ENCODE measurements at regions of chr1 and their contacts with region 1.

Region 1: DNA sequence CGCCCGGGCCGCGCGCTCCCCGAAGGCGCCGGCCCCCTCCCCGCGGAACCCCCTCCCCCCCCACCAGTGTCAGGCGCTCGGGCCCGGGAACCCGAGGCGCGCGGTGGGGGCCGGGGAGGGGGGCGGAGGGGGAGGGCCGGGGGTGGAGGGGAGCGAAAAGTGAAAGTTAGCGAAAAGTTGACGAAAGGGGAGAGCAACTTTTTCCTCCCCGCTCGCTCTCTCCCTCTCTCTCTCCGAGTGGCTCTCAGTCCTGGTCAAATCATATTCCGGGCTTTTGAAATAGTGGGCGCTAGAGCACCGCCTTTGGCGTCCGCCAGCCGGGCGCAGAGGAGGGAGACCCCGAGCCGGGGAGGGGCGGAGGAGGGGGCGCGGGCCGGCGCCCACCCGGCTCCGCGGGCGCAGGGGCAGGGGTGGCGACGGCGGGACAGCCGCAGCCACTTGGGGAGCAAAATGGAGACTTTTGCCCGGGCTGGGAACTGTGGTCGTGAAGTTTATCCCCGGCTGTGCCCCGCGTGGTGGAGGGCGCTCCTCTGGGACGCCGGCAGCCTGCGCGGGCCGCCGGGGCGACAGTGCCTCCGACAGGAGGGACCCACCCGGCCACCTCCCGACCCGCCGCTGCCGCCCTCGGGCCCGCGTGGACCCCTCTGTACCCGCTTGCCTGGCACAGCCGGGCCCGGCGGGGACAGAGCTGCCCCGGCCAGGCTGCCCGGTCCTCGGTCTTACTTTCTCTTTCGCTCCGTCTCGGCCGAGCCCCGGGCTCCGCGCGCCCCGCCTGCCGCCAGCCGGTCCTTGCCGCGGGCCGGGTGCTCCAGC is 694 bp downstream of the PRDM16 start:
- DNase-seq: no peak
- ATAC-seq: peak; percentile 43
- H3K4me3 ChIP-seq: peak overlapping the region; percentile 63 to 65
- H3K27ac ChIP-seq: peak overlapping the region; percentile 75
- H3K4me1 ChIP-seq: peaks cover 40% of the 10 kb centered on the region
- H3K27me3 ChIP-seq: no peaks in the 10 kb centered on the region
- CTCF ChIP-seq: peak; percentile 73

Region 2: DNA sequence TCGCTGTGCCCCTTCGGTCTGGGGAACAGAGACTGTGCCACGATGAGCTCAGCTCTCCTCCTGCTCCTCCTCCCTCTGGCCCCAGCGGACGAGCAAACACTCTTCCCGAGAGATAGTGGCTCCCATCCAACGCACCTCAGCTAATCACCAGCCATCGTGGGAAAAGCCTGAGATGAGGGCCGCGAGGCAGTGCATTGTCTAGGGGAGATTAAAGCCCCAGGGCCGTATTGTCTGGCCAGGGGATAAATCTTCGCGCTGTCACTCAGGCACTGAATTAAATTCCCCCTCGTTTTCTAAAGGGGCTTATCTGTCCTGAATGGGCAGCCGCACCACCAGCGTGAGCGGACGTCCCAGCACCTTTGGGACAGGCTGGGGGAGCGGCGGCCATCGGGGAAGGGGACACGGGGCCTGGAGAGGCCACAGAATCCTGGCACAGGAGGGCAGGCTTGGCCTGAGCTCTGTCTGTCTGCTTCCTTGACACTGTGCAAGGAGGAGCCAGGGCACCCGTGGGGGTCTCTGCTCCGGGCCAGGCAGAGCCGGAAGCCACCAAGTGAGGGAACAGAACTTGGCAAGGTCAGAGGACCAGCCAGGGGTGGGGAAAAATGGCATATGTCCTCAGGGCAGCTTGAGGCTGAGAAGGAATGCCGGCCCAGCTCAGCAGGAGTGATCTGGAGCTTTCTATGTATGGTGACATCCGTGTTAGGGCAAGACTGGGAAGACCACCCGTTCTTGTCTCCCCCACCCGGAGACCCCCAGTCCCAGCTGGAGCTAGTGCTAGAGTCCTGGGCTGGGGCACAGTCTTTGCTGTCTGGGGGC is 31.6 kb after region 1 on chr1:
- CTCF ChIA-PET with region 1: no interaction called
- POLR2A ChIA-PET with region 1: no interaction called
- in situ Hi-C with region 1: no loop called
- intact Hi-C with region 1: no loop called
- DNase-seq: no peak
- ATAC-seq: no peak
- H3K4me3 ChIP-seq: no peak overlapping the region
- H3K27ac ChIP-seq: no peak overlapping the region
- H3K4me1 ChIP-seq: no peaks in the 10 kb centered on the region
- H3K27me3 ChIP-seq: no peaks in the 10 kb centered on the region
- CTCF ChIP-seq: no peak

Region 3: GRCh38 chr1:3113047-3113740 is 43.5 kb after region 1 on chr1:
- CTCF ChIA-PET with region 1: no interaction called
- POLR2A ChIA-PET with region 1: no interaction called
- in situ Hi-C with region 1: no loop called
- intact Hi-C with region 1: no loop called
- DNase-seq: no peak
- ATAC-seq: peak; percentile 57; the same call in 1 of the 2 replicates
- H3K4me3 ChIP-seq: no peak overlapping the region
- H3K27ac ChIP-seq: no peak overlapping the region
- H3K4me1 ChIP-seq: 0 out of 2 replicates have a peak, but pooled peaks cover 4% of the 10 kb centered on the region
- H3K27me3 ChIP-seq: no peaks in the 10 kb centered on the region
- CTCF ChIP-seq: no peak

Region 4: GRCh38 chr1:3126756-3127597 is 57.3 kb after region 1 on chr1:
- CTCF ChIA-PET with region 1: no interaction called
- POLR2A ChIA-PET with region 1: no interaction called
- in situ Hi-C with region 1: no loop called
- intact Hi-C with region 1: no loop called
- DNase-seq: no peak
- ATAC-seq: no peak
- H3K4me3 ChIP-seq: no peak overlapping the region
- H3K27ac ChIP-seq: no peak overlapping the region
- H3K4me1 ChIP-seq: peaks cover 14% of the 10 kb centered on the region
- H3K27me3 ChIP-seq: no peaks in the 10 kb centered on the region
- CTCF ChIP-seq: no peak

Region 5: GRCh38 chr1:3423245-3423829 is 353.6 kb after region 1 on chr1:
- CTCF ChIA-PET with region 1: interaction called, 7 read pairs
- POLR2A ChIA-PET with region 1: no interaction called
- in situ Hi-C with region 1: no loop called
- intact Hi-C with region 1: loop called (anchors 5 kb)
- DNase-seq: no peak
- ATAC-seq: no peak
- H3K4me3 ChIP-seq: no peak overlapping the region
- H3K27ac ChIP-seq: no peak overlapping the region
- H3K4me1 ChIP-seq: no peaks in the 10 kb centered on the region
- H3K27me3 ChIP-seq: no peaks in the 10 kb centered on the region
- CTCF ChIP-seq: no peak

Region 6: GRCh38 chr1:4126731-4127594 is 1057.3 kb after region 1 on chr1:
- CTCF ChIA-PET with region 1: interaction called, 10 read pairs
- POLR2A ChIA-PET with region 1: no interaction called
- in situ Hi-C with region 1: no loop called
- intact Hi-C with region 1: no loop called
- DNase-seq: no peak
- ATAC-seq: no peak
- H3K4me3 ChIP-seq: no peak overlapping the region
- H3K27ac ChIP-seq: no peak overlapping the region
- H3K4me1 ChIP-seq: no peaks in the 10 kb centered on the region
- H3K27me3 ChIP-seq: peaks cover 1% of the 10 kb centered on the region; the same call in 1 of the 2 replicates
- CTCF ChIP-seq: no peak